ENCODE measurements at regions of chr5 and their contacts with region 1.

Region 1: GRCh38 chr5:41707853-41708603 is 162.2 kb downstream of the OXCT1 start:
- DNase-seq: peak; percentile 82

Region 2: DNA sequence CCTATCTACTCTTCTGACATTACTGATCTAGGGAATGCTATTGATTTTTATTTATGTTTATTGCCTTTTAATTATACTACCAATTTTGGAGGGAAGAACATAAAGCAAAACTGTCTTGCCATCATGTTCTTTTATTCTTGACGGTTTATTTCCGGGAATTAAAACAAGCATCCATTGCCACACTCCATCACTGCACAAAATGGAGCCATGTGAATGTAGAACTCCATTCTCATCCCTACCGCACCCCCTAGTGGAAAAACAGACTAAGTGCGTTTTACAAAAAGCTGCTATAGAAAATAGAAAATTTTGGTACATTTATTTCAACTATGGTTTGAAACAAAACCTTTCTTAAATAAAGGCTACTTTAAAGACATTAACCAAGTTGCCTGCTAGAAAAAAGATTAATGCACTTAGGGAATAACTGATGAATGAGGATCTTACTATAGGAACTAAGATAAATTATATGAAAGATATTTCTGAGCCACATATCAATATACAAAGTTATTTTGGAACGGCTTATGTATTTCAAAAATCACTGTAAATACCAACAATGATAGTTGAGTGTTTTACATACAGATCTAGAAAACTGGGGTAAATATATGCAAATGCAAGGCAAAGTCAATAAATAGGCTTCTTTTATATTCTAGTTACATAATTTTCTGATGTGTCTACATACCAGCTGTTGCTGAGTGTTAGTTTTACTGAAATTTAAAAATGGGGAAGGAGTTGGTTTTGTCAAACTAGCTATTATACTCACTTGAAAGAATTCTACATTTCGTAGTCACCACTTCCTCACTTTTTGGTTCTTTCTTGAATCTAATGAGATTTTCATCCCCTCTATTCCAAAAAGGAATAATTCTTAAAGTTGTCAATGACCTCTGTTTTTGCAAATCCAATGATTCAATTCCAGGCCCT is 135.7 kb after region 1 on chr5:
- in situ Hi-C with region 1: loop called (anchors 25 kb)
- DNase-seq: peak; percentile 88

Measured in SK-MEL-5 (cell line).